GM23248 (cell line): ENCODE measurements at regions of chr4 and their contacts with region 1.

Region 1: DNA sequence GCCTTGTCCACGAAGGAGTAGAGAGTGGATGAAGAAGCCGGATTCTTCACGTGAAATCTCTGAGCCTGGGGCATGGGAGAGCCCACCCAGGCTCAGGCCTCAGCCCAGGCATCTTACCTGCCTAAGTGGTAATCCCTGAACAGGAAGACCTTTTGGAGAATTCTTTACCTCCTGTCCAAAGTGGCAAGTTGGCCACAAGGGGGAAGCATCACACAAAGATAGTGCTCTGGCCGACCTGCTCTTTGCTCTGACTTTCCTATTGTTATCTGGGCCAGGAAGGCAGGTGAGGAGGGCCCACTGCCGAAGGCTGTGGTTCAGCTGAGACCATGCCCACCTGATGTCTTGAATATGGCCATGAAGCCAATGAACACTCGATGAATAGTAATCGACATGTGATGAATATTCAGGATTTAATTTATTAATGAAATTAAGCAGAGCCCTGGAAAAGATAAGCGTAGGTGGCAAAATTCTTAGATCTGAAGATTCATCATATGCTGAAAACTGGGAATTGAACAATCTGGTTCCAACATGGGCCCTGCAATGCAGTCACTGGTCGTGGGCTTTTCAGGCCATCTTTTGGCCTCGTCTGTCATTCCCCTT is 93.8 kb downstream of the PDGFRA start:
- DNase-seq: peak; percentile 79
- H3K4me3 ChIP-seq: no peak overlapping the region
- H3K27ac ChIP-seq: no peak overlapping the region
- H3K4me1 ChIP-seq: no peaks in the 10 kb centered on the region
- H3K27me3 ChIP-seq: no peaks in the 10 kb centered on the region

Region 2: DNA sequence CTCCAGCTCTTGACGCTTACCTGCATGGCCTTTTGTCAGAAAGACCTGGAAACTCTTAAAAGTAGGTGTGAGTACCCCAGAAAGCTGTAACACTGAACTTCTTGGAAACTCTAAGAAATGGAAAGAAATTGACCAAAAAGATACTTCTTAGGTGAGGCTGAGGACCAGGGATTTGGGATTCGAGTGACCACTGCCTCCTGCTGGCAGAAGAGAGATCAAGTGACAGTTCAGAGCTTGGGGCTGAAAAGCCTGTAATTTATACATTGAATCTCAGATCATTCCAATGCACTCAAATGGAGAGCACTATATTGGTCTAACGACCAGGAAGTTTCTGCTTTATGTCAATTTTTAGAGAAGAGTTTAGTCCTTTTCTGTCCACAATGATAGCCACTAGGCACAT is 110.8 kb after region 1 on chr4:
- in situ Hi-C with region 1: no loop called
- DNase-seq: peak; percentile 46
- H3K4me3 ChIP-seq: no peak overlapping the region
- H3K27ac ChIP-seq: no peak overlapping the region
- H3K4me1 ChIP-seq: no peaks in the 10 kb centered on the region
- H3K27me3 ChIP-seq: no peaks in the 10 kb centered on the region

Region 3: DNA sequence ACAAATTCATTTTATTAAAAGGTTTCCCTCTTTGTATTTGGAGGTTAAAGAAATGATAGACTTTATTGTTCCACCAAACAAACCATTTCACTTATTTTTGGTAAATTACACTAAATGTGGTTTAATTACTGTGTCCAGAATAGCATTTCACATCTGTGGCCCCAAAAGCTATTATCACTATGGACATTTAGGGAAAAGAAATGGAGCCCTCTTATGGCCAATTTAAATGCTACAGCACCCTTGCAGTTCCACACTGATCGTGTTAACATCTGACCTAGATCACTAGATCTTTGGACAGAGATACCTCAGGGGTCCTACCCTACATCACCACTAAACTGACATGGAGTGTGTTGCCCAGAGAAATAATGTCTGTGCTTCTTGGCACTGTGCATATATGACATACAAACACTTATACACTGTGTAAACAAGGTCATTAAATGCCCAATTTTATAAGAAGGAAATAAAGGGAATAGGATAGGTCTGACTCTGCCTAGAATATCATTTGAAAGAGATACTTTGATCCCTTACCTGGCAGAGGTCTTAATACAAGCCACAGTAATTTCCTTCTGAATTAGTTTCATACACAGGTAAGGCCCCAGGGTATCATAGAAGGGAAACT is 638.5 kb after region 1 on chr4:
- in situ Hi-C with region 1: loop called (anchors 10 kb)
- DNase-seq: peak; percentile 60
- H3K4me3 ChIP-seq: no peak overlapping the region
- H3K27ac ChIP-seq: no peak overlapping the region
- H3K4me1 ChIP-seq: peaks cover 29% of the 10 kb centered on the region
- H3K27me3 ChIP-seq: no peaks in the 10 kb centered on the region

Region 4: GRCh38 chr4:55096619-55097018 is 773.7 kb after region 1 on chr4:
- in situ Hi-C with region 1: no loop called
- DNase-seq: no peak
- H3K4me3 ChIP-seq: no peak overlapping the region
- H3K27ac ChIP-seq: no peak overlapping the region
- H3K4me1 ChIP-seq: no peaks in the 10 kb centered on the region
- H3K27me3 ChIP-seq: no peaks in the 10 kb centered on the region